CD8-positive, alpha-beta memory T cell (primary cell): ENCODE measurements at regions of chr9 and their contacts with region 1.

Region 1: DNA sequence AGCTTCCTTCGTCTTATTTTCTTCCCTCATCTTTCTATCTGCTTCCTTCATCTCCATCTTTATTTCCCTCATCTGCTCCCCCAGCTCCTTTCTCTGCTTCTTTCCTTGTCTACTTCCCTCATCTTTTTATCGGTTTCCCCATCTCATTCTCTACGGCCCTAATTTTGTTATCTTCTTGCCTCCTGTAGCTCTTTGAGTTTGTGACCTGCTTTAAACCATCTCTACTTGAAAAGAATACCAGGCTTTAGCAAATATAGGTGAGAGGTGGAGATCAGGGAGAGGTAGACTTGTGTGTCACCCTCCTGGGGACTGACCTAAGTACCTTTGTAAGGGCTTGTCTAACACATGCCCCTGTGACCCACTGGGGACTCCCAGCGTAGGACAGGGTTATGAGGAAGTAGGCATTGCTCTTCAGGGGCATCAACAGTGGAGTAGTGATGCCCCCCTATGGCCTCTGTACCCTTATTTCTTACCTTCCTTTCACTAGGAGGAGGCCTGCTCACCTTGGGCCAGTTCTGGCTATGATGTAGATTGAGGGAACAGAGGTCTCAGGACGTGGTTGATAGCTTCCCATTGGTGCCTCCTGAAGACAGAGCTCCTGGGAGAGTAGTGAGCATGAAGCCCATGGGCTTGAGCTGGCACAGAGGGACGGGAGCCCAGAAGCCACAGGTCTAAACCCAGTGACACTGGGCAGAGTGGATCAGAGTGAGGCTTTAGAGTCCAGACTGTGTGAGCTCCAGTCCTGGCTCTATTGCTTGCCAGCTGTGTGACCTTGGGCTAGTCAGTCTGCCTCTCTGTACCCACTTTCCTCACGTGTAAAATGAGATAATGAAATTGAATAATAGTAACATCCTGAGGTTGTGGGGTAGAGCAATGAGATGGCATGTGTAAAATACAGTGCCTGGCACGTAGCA is 191.6 kb downstream of the AOPEP start:
- DNase-seq: peak in 3 of 5 donors; percentile 5 to 49 (median 24)
- H3K4me3 ChIP-seq: no peak overlapping the region
- H3K4me3 Mint-ChIP-seq: no peak overlapping the region
- H3K27ac ChIP-seq: no peak overlapping the region
- H3K27ac Mint-ChIP-seq: peak overlapping the region in 2 of 8 donors; percentile 36 to 40
- H3K4me1 ChIP-seq: no peaks in the 10 kb centered on the region
- H3K4me1 Mint-ChIP-seq: no peaks in the 10 kb centered on the region
- H3K27me3 ChIP-seq: no peaks in the 10 kb centered on the region
- H3K27me3 Mint-ChIP-seq: no peaks in the 10 kb centered on the region

Region 2: GRCh38 chr9:94783102-94783664 is 134.9 kb before region 1 on chr9:
- CTCF ChIA-PET with region 1: interaction called, 14 read pairs
- POLR2A ChIA-PET with region 1: no interaction called
- DNase-seq: peak in 4 of 5 donors; percentile 3 to 55 (median 18)
- H3K4me3 ChIP-seq: no peak overlapping the region
- H3K4me3 Mint-ChIP-seq: no peak overlapping the region
- H3K27ac ChIP-seq: no peak overlapping the region
- H3K27ac Mint-ChIP-seq: no peak overlapping the region
- H3K4me1 ChIP-seq: no peaks in the 10 kb centered on the region
- H3K4me1 Mint-ChIP-seq: peaks cover 7 to 12% (median 9%) of the 10 kb centered on the region in 3 donors
- H3K27me3 ChIP-seq: no peaks in the 10 kb centered on the region
- H3K27me3 Mint-ChIP-seq: no peaks in the 10 kb centered on the region